ENCODE measurements at regions of chr5 and their contacts with region 1.

Region 1: DNA sequence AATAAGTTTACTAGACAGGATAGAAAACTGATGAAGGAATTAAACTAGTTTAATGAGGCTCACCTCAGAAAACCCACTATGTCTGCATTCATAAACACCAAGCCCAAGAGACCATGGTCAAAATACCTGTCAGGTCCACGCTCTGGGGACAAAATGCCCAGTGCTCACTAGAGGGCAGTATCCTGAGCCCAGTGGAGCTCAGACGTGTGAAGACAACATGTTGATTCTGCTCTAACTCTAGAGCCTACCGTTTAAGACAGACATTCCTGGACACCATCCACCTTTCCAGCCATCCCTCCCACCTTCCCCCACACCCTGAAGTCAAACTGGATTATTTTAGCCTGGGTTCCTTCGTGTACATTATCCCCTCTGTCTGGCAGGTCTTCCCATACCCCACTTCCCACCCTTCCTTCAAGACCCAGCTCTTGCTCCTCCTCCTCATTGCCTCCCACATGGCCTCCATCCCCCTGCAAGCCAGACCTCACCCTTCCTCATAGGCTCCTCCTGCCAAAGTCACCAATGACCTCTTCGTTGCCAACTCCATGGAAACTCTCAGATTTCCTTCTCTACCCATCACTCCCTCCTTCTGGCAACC is 142.3 kb upstream of the FSTL4 start:
- DNase-seq: peak; percentile 9 to 54
- H3K4me3 ChIP-seq: no peak overlapping the region
- H3K27ac ChIP-seq: no peak overlapping the region
- H3K4me1 ChIP-seq: no peaks in the 10 kb centered on the region
- H3K27me3 ChIP-seq: peaks cover 0 to 6% (median 0%) of the 10 kb centered on the region in 4 experiments; a peak in 3 of 7 replicates
- CTCF ChIP-seq: peak; percentile 75 to 95 (median 80)
- EP300 ChIP-seq: no peak
- POLR2A ChIP-seq: no peak
- RAD21 ChIP-seq: peak; percentile 70 to 75

Region 2: GRCh38 chr5:133406977-133407678 is 347.5 kb before region 1 on chr5:
- CTCF ChIA-PET with region 1: no interaction called
- POLR2A ChIA-PET with region 1: no interaction called
- DNase-seq: peak in 1 of 2 experiments; percentile 11
- H3K4me3 ChIP-seq: no peak overlapping the region
- H3K27ac ChIP-seq: no peak overlapping the region
- H3K4me1 ChIP-seq: peaks cover 0 to 2% (median under 1%) of the 10 kb centered on the region in 4 experiments; a peak in 1 of 7 replicates
- H3K27me3 ChIP-seq: no peaks in the 10 kb centered on the region
- CTCF ChIP-seq: no peak
- EP300 ChIP-seq: no peak
- POLR2A ChIP-seq: no peak
- RAD21 ChIP-seq: no peak

Region 3: DNA sequence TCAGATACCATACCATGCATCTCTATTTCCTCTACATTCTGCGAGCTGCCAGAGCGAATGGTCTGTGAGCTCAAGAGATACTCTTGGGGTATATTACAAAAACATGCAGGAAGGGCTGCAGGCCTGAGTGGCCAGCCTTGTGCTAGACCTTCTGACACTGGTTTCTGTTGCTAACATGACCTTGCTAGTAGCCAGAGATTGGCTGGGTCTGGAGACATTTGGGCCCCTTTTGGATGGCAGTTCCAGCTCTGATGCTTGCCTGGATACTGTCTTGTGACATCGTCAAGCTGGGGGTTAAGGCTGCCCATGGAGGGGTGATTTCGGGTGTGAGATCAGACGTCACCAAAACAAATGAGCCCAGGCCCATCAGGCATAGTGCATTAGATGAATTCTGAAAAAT is 86.2 kb before region 1 on chr5:
- CTCF ChIA-PET with region 1: no interaction called
- POLR2A ChIA-PET with region 1: no interaction called
- DNase-seq: peak in 1 of 2 experiments; percentile 8
- H3K4me3 ChIP-seq: no peak overlapping the region
- H3K27ac ChIP-seq: no peak overlapping the region
- H3K4me1 ChIP-seq: no peaks in the 10 kb centered on the region; a peak in 1 of 7 replicates
- H3K27me3 ChIP-seq: no peaks in the 10 kb centered on the region
- CTCF ChIP-seq: no peak
- EP300 ChIP-seq: no peak
- POLR2A ChIP-seq: no peak
- RAD21 ChIP-seq: no peak

Region 4: DNA sequence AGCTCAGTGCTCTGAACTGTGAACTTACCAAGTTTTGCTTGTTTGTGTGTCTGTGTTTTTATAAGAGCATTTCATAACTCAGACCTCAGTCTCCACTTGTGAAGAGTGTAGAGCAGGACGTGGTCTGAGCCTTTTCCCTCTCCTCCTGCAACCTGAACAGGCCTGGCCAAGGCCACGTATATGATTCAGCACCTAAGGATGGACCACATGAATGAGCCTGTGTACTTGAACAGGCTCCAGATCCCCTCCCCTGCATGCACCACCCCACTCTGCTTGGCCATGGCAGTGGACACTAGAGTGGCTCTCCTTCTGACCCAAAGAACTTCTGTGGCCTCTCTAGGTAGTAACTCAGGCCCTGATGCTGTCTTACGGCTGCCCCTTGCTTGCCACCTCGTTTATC is 16.4 kb before region 1 on chr5:
- CTCF ChIA-PET with region 1: interaction called, 14 read pairs
- POLR2A ChIA-PET with region 1: no interaction called
- DNase-seq: no peak
- H3K4me3 ChIP-seq: no peak overlapping the region
- H3K27ac ChIP-seq: no peak overlapping the region
- H3K4me1 ChIP-seq: no peaks in the 10 kb centered on the region
- H3K27me3 ChIP-seq: no peaks in the 10 kb centered on the region
- CTCF ChIP-seq: no peak
- EP300 ChIP-seq: no peak
- POLR2A ChIP-seq: no peak
- RAD21 ChIP-seq: no peak

Region 5: DNA sequence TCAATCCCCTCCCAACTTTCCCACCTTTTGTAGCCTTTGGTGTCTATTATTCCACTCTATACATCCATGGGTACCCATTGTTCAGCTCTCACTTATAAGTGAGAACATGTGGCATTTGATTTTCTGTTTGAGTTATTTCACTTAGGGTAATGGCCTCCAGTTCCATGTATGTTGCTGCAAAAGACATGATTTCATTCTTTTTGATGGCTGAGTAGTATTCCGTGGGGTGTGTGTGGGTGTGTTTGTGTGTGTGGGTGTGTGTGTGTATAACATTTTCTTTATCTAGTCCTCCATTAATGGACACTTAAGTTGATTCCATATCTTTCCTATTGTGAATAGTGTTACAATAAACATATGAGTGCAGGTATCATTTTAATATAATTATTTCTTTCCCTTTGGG is 15.2 kb after region 1 on chr5:
- CTCF ChIA-PET with region 1: interaction called, 16 read pairs
- POLR2A ChIA-PET with region 1: no interaction called
- DNase-seq: no peak
- H3K4me3 ChIP-seq: no peak overlapping the region
- H3K27ac ChIP-seq: no peak overlapping the region
- H3K4me1 ChIP-seq: no peaks in the 10 kb centered on the region
- H3K27me3 ChIP-seq: no peaks in the 10 kb centered on the region; a peak in 1 of 7 replicates
- CTCF ChIP-seq: no peak
- EP300 ChIP-seq: no peak
- POLR2A ChIP-seq: no peak
- RAD21 ChIP-seq: no peak

Region 6: GRCh38 chr5:133775584-133776304 is 21.1 kb after region 1 on chr5:
- CTCF ChIA-PET with region 1: interaction called, 17 read pairs
- POLR2A ChIA-PET with region 1: no interaction called
- DNase-seq: no peak
- H3K4me3 ChIP-seq: no peak overlapping the region
- H3K27ac ChIP-seq: no peak overlapping the region
- H3K4me1 ChIP-seq: no peaks in the 10 kb centered on the region
- H3K27me3 ChIP-seq: no peaks in the 10 kb centered on the region; a peak in 1 of 7 replicates
- CTCF ChIP-seq: no peak
- EP300 ChIP-seq: no peak
- POLR2A ChIP-seq: no peak
- RAD21 ChIP-seq: no peak

Region 7: GRCh38 chr5:133785182-133785581 is 30.5 kb after region 1 on chr5:
- CTCF ChIA-PET with region 1: interaction called, 20 read pairs
- POLR2A ChIA-PET with region 1: no interaction called
- DNase-seq: no peak
- H3K4me3 ChIP-seq: no peak overlapping the region
- H3K27ac ChIP-seq: no peak overlapping the region
- H3K4me1 ChIP-seq: peaks cover 0 to 6% (median 2%) of the 10 kb centered on the region in 4 experiments; a peak in 4 of 7 replicates
- H3K27me3 ChIP-seq: peaks cover 0 to 4% (median 3%) of the 10 kb centered on the region in 4 experiments; a peak in 2 of 7 replicates
- CTCF ChIP-seq: peak; percentile 43 to 68 (median 51)
- EP300 ChIP-seq: no peak
- POLR2A ChIP-seq: no peak
- RAD21 ChIP-seq: peak; percentile 46 to 60

Region 8: GRCh38 chr5:133944263-133945185 is 189.9 kb after region 1 on chr5:
- CTCF ChIA-PET with region 1: interaction called, 29 read pairs
- POLR2A ChIA-PET with region 1: no interaction called
- DNase-seq: peak in 1 of 2 experiments; percentile 85
- H3K4me3 ChIP-seq: no peak overlapping the region
- H3K27ac ChIP-seq: no peak overlapping the region
- H3K4me1 ChIP-seq: no peaks in the 10 kb centered on the region
- H3K27me3 ChIP-seq: no peaks in the 10 kb centered on the region
- CTCF ChIP-seq: peak; percentile 84 to 98 (median 92)
- EP300 ChIP-seq: no peak
- POLR2A ChIP-seq: no peak
- RAD21 ChIP-seq: peak; percentile 97 to 98

Measured in H1 (cell line).